CD8-positive, alpha-beta T cell (primary cell): ENCODE measurements at regions of chr6 and their contacts with region 1.

Region 1: DNA sequence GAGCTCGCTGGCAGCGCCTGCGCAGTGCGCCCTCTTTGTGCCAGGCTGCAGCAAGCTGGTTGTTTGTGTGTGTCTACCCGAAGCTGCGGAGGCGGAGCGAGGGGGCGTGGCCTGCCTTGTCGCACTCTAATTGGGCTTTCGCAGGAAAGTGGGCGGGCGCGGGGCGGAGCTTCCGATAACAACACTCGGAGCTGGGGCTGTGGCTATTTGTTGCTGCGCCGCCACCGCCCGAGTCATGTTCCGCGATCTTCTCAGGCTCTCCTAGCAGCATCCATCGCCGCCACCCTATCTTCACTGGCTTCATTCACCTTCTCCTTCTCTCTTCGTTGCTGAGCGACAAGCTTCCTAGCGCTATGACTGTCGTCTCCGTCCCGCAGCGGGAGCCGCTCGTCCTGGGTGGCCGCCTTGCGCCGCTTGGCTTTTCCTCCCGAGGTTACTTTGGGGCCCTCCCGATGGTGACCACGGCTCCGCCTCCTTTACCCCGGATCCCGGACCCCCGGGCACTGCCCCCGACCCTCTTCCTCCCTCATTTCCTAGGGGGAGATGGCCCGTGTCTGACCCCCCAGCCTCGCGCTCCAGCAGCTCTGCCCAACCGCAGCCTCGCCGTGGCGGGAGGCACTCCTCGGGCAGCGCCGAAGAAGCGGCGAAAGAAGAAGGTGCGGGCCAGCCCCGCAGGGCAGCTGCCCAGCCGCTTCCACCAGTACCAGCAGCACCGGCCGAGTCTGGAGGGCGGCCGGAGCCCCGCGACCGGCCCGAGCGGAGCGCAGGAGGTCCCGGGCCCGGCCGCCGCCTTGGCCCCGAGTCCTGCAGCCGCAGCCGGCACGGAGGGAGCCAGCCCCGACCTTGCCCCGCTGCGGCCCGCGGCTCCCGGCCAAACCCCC is at the start of gene PNRC1:
- DNase-seq: peak; percentile 100
- ATAC-seq: peak; percentile 77
- H3K4me3 ChIP-seq: peak within 1 kb of the TSS; percentile 83 to 99
- H3K4me3 Mint-ChIP-seq: peak within 1 kb of the TSS; percentile 96
- H3K27ac ChIP-seq: peak within 1 kb of the TSS; percentile 94 to 100
- H3K27ac Mint-ChIP-seq: peak within 1 kb of the TSS; percentile 98
- H3K4me1 ChIP-seq: peaks cover 37% of the 10 kb centered on the region
- H3K4me1 Mint-ChIP-seq: peaks cover 38% of the 10 kb centered on the region
- H3K27me3 ChIP-seq: no peaks in the 10 kb centered on the region
- H3K27me3 Mint-ChIP-seq: no peaks in the 10 kb centered on the region
- CTCF ChIP-seq: no peak
- total RNA-seq, gene PNRC1: 1,160 to 1,236 TPM

Region 2: DNA sequence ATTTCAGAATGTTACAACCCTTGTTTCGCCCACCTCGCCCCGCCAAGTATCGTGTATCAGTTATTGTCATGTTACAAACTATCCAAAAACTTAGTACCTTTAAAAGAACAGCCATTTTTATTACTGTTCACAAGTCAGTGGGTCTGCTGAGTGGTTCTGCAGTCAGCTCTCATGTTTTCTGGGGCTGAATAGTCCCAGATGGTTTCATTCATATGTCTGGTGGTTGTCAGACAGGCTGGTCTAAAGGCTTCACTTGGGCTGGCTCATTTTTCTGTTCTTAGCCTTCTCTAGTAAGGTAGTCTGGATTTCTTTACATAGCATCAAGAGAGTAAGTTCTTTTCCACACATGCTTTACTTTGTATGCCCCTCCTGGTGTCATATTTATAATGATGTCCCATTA is 1916.8 kb before region 1 on chr6:
- CTCF ChIA-PET with region 1: no interaction called
- POLR2A ChIA-PET with region 1: no interaction called
- intact Hi-C with region 1: loop called in 1 of 2 experiments (anchors 10 kb)
- DNase-seq: no peak
- ATAC-seq: no peak
- H3K4me3 ChIP-seq: no peak overlapping the region
- H3K4me3 Mint-ChIP-seq: no peak overlapping the region
- H3K27ac ChIP-seq: no peak overlapping the region
- H3K27ac Mint-ChIP-seq: no peak overlapping the region
- H3K4me1 ChIP-seq: peaks cover 45% of the 10 kb centered on the region
- H3K4me1 Mint-ChIP-seq: peaks cover 76% of the 10 kb centered on the region
- H3K27me3 ChIP-seq: no peaks in the 10 kb centered on the region
- H3K27me3 Mint-ChIP-seq: no peaks in the 10 kb centered on the region
- CTCF ChIP-seq: no peak

Region 3: DNA sequence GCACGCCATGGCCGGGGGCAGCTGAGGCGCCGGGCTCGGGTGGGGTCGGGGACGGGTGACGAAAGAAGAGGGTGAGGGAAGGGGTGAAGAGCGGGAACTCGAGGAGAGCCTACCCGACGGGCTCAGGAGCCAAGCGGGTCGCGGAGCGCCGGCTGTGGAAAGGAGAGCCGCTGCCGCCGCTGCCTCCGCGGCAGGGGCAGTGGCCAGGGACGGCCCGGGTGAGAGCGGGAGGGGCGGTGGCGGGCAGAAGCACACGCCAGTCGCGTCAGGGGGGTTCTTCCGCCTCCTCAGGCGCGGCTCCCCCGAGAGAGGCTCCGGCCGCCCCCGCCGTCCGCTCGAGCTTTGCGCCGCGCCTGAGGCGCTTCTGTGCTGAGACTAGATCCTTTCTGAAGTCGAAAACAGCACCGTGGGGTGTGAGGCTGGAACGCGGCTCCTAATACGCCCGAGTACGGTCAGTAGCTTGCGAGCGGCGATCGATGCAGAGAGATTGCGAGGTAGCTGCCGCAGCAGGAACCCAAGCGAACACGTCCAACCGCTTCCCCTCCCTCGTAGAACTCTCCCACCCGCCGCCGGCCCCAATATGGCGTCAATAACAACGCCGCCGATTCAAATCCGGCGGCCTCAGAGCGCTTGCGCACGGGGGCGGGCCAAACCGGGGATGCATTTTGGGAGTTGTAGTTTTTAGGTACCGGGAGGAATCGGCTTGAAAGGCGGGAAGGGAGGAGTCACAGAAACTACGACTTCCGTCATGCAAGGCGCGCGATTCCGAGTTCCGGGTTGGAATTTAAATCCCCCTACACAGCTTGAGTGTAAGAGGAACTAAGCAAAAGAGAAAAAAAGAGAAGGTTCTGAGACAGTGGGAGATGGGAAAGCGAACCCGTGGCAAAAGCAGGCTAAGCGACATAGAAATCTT is 1378.8 kb before region 1 on chr6 and contains the start of gene AKIRIN2:
- CTCF ChIA-PET with region 1: no interaction called
- POLR2A ChIA-PET with region 1: interaction called, 8 read pairs
- intact Hi-C with region 1: loop called in 1 of 2 experiments (anchors 10 kb)
- DNase-seq: peak; percentile 94 to 99 (median 96)
- ATAC-seq: peak; percentile 85
- H3K4me3 ChIP-seq: peak within 1 kb of the TSS; percentile 72 to 96
- H3K4me3 Mint-ChIP-seq: peak within 1 kb of the TSS; percentile 92
- H3K27ac ChIP-seq: peak within 1 kb of the TSS; percentile 93
- H3K27ac Mint-ChIP-seq: peak within 1 kb of the TSS; percentile 96
- H3K4me1 ChIP-seq: peaks cover 17% of the 10 kb centered on the region
- H3K4me1 Mint-ChIP-seq: peaks cover 43% of the 10 kb centered on the region
- H3K27me3 ChIP-seq: no peaks in the 10 kb centered on the region
- H3K27me3 Mint-ChIP-seq: no peaks in the 10 kb centered on the region
- CTCF ChIP-seq: no peak
- total RNA-seq, gene AKIRIN2: 79.4 to 82.4 TPM

Region 4: DNA sequence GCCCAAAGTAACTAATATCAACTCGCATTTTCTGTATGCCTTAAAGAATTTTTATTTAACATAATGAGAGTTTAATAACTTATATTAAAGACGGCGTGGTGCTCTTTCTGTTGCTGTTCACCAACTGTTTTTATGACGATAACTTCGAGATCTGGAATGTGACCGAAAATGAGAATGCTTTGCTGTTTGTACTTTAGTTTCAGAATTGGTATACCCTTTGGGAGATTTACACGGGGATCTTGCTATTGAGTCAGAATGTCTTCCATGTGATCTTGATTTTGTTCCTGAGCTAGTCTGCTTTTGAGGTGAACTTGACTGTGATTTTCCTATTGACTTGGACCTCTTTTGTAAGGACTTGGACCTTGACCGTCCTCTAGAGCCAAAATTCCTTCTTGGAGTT is 17.7 kb after region 1 on chr6:
- CTCF ChIA-PET with region 1: no interaction called
- POLR2A ChIA-PET with region 1: interaction called, 11 read pairs
- intact Hi-C with region 1: no loop called
- DNase-seq: no peak
- ATAC-seq: no peak
- H3K4me3 ChIP-seq: no peak overlapping the region
- H3K4me3 Mint-ChIP-seq: no peak overlapping the region
- H3K27ac ChIP-seq: no peak overlapping the region
- H3K27ac Mint-ChIP-seq: no peak overlapping the region
- H3K4me1 ChIP-seq: no peaks in the 10 kb centered on the region
- H3K4me1 Mint-ChIP-seq: peaks cover 3% of the 10 kb centered on the region
- H3K27me3 ChIP-seq: no peaks in the 10 kb centered on the region
- H3K27me3 Mint-ChIP-seq: no peaks in the 10 kb centered on the region
- CTCF ChIP-seq: no peak

Region 5: GRCh38 chr6:89242574-89243330 is 162.0 kb after region 1 on chr6:
- CTCF ChIA-PET with region 1: interaction called, 4 read pairs
- POLR2A ChIA-PET with region 1: no interaction called
- intact Hi-C with region 1: loop called in 1 of 2 experiments (anchors 5 kb)
- DNase-seq: peak in 2 of 9 experiments; percentile 40 to 53
- ATAC-seq: no peak
- H3K4me3 ChIP-seq: no peak overlapping the region
- H3K4me3 Mint-ChIP-seq: no peak overlapping the region
- H3K27ac ChIP-seq: no peak overlapping the region
- H3K27ac Mint-ChIP-seq: no peak overlapping the region
- H3K4me1 ChIP-seq: peaks cover 15% of the 10 kb centered on the region
- H3K4me1 Mint-ChIP-seq: peaks cover 20% of the 10 kb centered on the region
- H3K27me3 ChIP-seq: no peaks in the 10 kb centered on the region
- H3K27me3 Mint-ChIP-seq: peaks cover 3% of the 10 kb centered on the region
- CTCF ChIP-seq: peak; percentile 35

Region 6: GRCh38 chr6:89371849-89372505 is 291.2 kb after region 1 on chr6:
- CTCF ChIA-PET with region 1: interaction called, 5 read pairs
- POLR2A ChIA-PET with region 1: interaction called, 10 read pairs
- intact Hi-C with region 1: loop called in 1 of 2 experiments (anchors 1 kb)
- DNase-seq: peak; percentile 67 to 88 (median 81)
- ATAC-seq: peak; percentile 59
- H3K4me3 ChIP-seq: no peak overlapping the region
- H3K4me3 Mint-ChIP-seq: no peak overlapping the region
- H3K27ac ChIP-seq: no peak overlapping the region
- H3K27ac Mint-ChIP-seq: peak overlapping the region; percentile 72
- H3K4me1 ChIP-seq: peaks cover 21% of the 10 kb centered on the region
- H3K4me1 Mint-ChIP-seq: peaks cover 28% of the 10 kb centered on the region
- H3K27me3 ChIP-seq: peaks cover 0 to 2% of the 10 kb centered on the region in 2 experiments
- H3K27me3 Mint-ChIP-seq: no peaks in the 10 kb centered on the region
- CTCF ChIP-seq: peak; percentile 91

Region 7: DNA sequence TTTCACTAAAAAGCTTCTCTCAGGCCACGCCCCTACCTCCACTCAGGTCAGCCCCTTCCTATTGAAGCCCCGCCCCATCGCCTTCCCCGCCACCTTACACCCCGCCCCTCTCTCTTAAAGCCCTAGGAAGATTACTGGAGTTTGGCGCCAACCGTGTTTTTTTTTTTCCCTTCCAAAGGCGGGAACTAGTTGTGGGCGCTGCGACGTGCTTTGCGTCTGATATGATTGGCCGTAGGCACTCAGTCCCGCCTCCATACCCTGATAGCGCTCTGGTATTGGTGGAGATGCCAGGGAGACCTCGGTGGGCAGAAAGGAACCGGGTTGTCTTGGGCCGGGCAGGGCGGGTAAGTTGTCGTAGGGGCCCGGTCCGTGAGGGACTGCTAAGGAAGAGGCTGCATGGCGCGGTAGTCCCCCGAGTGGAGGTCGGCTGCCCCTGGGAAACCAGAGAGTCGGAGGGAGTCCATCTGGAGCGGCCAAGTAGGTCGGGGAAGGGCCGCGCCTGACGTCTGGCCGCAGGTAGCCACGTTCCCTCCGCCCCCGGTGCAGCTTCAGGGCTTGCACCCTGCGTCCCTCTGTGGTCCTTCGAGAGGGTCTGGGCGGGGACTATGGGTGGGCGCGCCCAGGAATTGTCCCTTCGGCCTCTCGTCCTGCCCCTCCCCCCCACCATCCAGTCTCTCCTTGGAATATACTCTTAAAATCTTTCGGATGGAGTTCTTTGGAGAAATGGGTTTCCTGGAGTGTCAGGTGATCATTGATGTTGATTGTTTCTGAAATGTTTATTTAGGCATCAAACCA is 749.0 kb after region 1 on chr6 and contains the start of gene CASP8AP2:
- CTCF ChIA-PET with region 1: no interaction called
- POLR2A ChIA-PET with region 1: interaction called, 4 read pairs
- intact Hi-C with region 1: loop called (anchors 2 to 5 kb)
- DNase-seq: peak; percentile 88 to 99 (median 93)
- ATAC-seq: peak; percentile 94
- H3K4me3 ChIP-seq: peak within 1 kb of the TSS; percentile 82 to 95
- H3K4me3 Mint-ChIP-seq: peak within 1 kb of the TSS; percentile 99
- H3K27ac ChIP-seq: peak within 1 kb of the TSS; percentile 71 to 84
- H3K27ac Mint-ChIP-seq: peak within 1 kb of the TSS; percentile 97
- H3K4me1 ChIP-seq: peaks cover 14% of the 10 kb centered on the region
- H3K4me1 Mint-ChIP-seq: peaks cover 35% of the 10 kb centered on the region
- H3K27me3 ChIP-seq: no peaks in the 10 kb centered on the region
- H3K27me3 Mint-ChIP-seq: no peaks in the 10 kb centered on the region
- CTCF ChIP-seq: no peak
- total RNA-seq, gene CASP8AP2: 13.1 to 14.8 TPM